IMR-90 (cell line): ENCODE measurements at regions of chr2 and their contacts with region 1.

Region 1: GRCh38 chr2:30300456-30301221 is 69.3 kb downstream of the LBH start:
- DNase-seq: peak; percentile 96
- ATAC-seq: peak; percentile 71
- H3K4me3 ChIP-seq: no peak overlapping the region
- H3K27ac ChIP-seq: peak overlapping the region; percentile 88
- H3K4me1 ChIP-seq: peaks cover 25% of the 10 kb centered on the region
- H3K27me3 ChIP-seq: no peaks in the 10 kb centered on the region
- CTCF ChIP-seq: no peak
- POLR2A ChIP-seq: no peak; the same call in 1 of the 2 replicates
- RAD21 ChIP-seq: no peak; the same call in none of the 2 replicates

Region 2: GRCh38 chr2:30252723-30253701 is 47.6 kb before region 1 on chr2:
- CTCF ChIA-PET with region 1: no interaction called
- POLR2A ChIA-PET with region 1: no interaction called
- dilution Hi-C with region 1: no loop called
- in situ Hi-C with region 1: no loop called
- intact Hi-C with region 1: loop called (anchors 2 kb)
- DNase-seq: peak; percentile 85
- ATAC-seq: peak; percentile 40
- H3K4me3 ChIP-seq: no peak overlapping the region
- H3K27ac ChIP-seq: peak overlapping the region; percentile 90
- H3K4me1 ChIP-seq: peaks cover 49% of the 10 kb centered on the region
- H3K27me3 ChIP-seq: no peaks in the 10 kb centered on the region
- CTCF ChIP-seq: no peak
- POLR2A ChIP-seq: no peak
- RAD21 ChIP-seq: peak; percentile 7; the same call in 1 of the 2 replicates

Region 3: DNA sequence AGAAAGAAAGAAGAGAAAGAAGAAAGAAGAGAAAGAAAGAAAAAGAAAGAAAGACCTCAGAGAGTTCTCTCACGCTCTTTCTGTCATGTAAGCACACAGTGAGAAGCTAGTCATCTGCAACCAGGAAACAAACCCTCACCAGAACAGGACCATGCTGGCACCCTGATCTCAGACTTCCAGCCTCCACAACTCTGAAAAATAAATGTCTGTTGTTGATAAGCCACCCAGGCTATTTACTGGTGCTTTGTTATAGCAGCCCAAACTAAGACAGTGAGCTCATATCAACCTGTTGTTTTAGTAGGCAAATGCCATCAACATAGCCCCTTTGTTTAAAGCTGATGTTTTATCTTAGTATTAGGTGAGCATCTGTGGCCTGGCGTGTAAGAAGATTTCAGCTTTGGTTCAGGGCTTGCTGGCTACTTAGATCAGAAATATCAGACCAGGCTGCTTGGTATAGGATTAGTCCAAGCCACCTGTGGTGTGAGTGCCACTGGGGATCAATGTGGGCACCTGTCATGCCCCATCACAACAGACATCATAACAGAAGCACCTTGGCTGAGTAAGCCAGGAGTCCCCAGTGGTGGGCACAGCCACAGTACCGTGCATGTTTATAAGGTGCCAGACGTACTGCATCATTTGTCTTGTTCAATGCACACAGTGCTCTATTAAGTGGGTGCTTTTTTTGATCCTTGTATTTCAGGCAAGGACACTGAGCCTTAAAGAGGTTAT is 25.1 kb after region 1 on chr2:
- CTCF ChIA-PET with region 1: no interaction called
- POLR2A ChIA-PET with region 1: interaction called, 13 read pairs
- dilution Hi-C with region 1: no loop called
- in situ Hi-C with region 1: no loop called
- intact Hi-C with region 1: no loop called
- DNase-seq: no peak
- ATAC-seq: no peak
- H3K4me3 ChIP-seq: no peak overlapping the region
- H3K27ac ChIP-seq: no peak overlapping the region
- H3K4me1 ChIP-seq: no peaks in the 10 kb centered on the region
- H3K27me3 ChIP-seq: no peaks in the 10 kb centered on the region; the same call in 1 of the 2 replicates
- CTCF ChIP-seq: no peak
- POLR2A ChIP-seq: no peak
- RAD21 ChIP-seq: no peak

Region 4: DNA sequence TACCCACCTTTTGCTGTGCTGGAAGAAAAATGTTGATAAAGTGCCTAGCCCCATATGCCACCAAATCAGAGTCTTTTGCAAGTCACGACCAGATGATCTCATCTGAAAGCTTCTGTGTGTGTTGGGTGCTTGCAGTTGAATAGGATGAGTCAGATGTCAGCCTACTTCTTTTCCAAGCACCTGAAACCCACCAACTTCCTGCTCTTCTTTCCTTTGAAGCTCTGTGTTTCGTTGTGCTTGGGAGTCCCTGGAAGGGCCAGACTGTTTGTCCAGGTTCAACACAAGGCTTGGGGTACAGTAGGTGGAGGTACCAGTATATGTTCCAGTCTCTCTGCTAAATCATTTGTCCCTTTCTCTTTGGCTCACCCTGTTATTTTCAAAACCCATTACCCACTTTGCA is 109.6 kb after region 1 on chr2:
- CTCF ChIA-PET with region 1: interaction called, 5 read pairs
- POLR2A ChIA-PET with region 1: interaction called, 6 read pairs
- dilution Hi-C with region 1: no loop called
- in situ Hi-C with region 1: no loop called
- intact Hi-C with region 1: loop called (anchors 5 kb)
- DNase-seq: peak; percentile 91
- ATAC-seq: 0 out of 2 replicates have a peak, but pooled peaks have one; percentile 1
- H3K4me3 ChIP-seq: no peak overlapping the region
- H3K27ac ChIP-seq: peak overlapping the region; percentile 69
- H3K4me1 ChIP-seq: peaks cover 45% of the 10 kb centered on the region
- H3K27me3 ChIP-seq: no peaks in the 10 kb centered on the region
- CTCF ChIP-seq: no peak
- POLR2A ChIP-seq: no peak
- RAD21 ChIP-seq: no peak

Region 5: GRCh38 chr2:30666307-30666874 is 365.8 kb after region 1 on chr2:
- CTCF ChIA-PET with region 1: no interaction called
- POLR2A ChIA-PET with region 1: interaction called, 4 read pairs
- dilution Hi-C with region 1: no loop called
- in situ Hi-C with region 1: no loop called
- intact Hi-C with region 1: loop called (anchors 2 kb)
- DNase-seq: peak; percentile 99
- ATAC-seq: peak; percentile 73
- H3K4me3 ChIP-seq: no peak overlapping the region
- H3K27ac ChIP-seq: peak overlapping the region; percentile 99
- H3K4me1 ChIP-seq: peaks cover 26% of the 10 kb centered on the region
- H3K27me3 ChIP-seq: no peaks in the 10 kb centered on the region
- CTCF ChIP-seq: no peak
- POLR2A ChIP-seq: no peak; the same call in 1 of the 2 replicates
- RAD21 ChIP-seq: no peak